HepG2 (cell line): ENCODE measurements at regions of chr7 and their contacts with region 1.

Region 1: GRCh38 chr7:128835790-128836641 is 5.8 kb downstream of the FLNC start:
- DNase-seq: no peak
- ATAC-seq: no peak
- H3K4me3 ChIP-seq: no peak overlapping the region
- H3K27ac ChIP-seq: no peak overlapping the region
- H3K4me1 ChIP-seq: peaks cover 12% of the 10 kb centered on the region
- H3K27me3 ChIP-seq: peaks cover 5 to 23% of the 10 kb centered on the region in 2 experiments; a peak in 3 of 5 replicates
- CTCF ChIP-seq: no peak
- EP300 ChIP-seq: no peak
- POLR2A ChIP-seq: no peak
- RAD21 ChIP-seq: no peak

Region 2: DNA sequence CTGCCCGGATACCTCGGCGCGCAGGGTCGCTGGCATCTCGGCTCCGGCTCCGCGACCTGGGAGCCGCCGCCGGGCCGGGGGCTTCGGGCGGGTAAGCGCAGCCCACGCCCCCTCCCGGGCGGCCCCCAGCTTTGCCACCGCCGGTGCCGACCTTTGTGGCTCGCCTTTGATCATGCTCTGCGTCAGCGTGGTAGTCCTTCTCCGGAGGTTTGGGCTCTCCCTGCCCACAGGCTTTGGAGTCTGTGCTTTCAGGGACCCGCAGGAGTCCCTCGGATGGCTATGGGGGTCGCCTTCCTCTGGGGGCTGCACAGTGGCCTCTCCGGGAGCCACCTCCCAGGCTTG is 33.9 kb after region 1 on chr7:
- CTCF ChIA-PET with region 1: no interaction called
- POLR2A ChIA-PET with region 1: no interaction called
- in situ Hi-C with region 1: no loop called
- intact Hi-C with region 1: loop called (anchors 5 kb)
- DNase-seq: no peak
- ATAC-seq: peak; percentile 52
- H3K4me3 ChIP-seq: peak overlapping the region; percentile 63 to 73 (median 68); a peak in 5 of 6 replicates
- H3K27ac ChIP-seq: no peak overlapping the region
- H3K4me1 ChIP-seq: peaks cover 43% of the 10 kb centered on the region
- H3K27me3 ChIP-seq: peaks cover 3 to 12% of the 10 kb centered on the region in 2 experiments; a peak in 4 of 5 replicates
- CTCF ChIP-seq: no peak; the same call in 1 of the 2 replicates
- EP300 ChIP-seq: no peak
- POLR2A ChIP-seq: no peak
- RAD21 ChIP-seq: no peak